Motor neuron (in vitro differentiated cells): ENCODE measurements at regions of chr12 and their contacts with region 1.

Region 1: DNA sequence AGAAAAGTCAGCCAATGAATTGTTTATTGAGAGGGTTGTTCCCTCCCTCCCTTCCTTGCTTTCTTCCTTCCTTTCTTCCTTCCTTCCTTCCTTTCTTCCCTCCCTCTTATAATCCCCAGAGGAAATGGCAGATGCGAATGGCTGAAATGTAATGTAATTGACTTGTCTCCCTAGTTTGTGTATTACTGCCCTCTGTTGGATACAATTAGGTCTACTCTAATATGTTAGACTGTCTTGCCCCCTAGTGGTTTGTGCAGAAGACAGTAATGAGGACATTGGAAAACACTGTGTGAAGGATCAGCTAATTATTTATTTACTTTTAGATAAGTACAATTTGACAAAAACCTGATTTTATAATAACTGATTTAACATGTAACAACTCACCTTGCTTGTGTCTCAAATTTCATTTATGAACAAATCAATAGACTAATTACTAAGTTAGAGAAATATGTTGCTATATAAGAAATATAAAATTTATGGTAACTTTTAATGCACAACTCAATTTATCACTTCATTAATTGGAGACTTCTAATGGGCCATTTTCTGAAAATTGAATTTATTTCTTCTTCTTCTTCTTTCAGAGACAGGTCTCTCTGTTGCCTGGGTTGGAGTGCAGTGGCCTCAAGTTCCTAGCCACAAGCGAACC is 229.8 kb upstream of the LRIG3 start:
- ATAC-seq: peak; percentile 55 to 97 (median 88)
- H3K4me3 ChIP-seq: no peak overlapping the region
- H3K27ac ChIP-seq: no peak overlapping the region
- H3K4me1 ChIP-seq: no peaks in the 10 kb centered on the region

Region 2: GRCh38 chr12:59067083-59067482 is 83.0 kb before region 1 on chr12:
- in situ Hi-C with region 1: no loop called
- ATAC-seq: peak; percentile 25 to 93 (median 81)
- H3K4me3 ChIP-seq: no peak overlapping the region
- H3K27ac ChIP-seq: no peak overlapping the region
- H3K4me1 ChIP-seq: peaks cover 10 to 14% of the 10 kb centered on the region in 2 donors

Region 3: DNA sequence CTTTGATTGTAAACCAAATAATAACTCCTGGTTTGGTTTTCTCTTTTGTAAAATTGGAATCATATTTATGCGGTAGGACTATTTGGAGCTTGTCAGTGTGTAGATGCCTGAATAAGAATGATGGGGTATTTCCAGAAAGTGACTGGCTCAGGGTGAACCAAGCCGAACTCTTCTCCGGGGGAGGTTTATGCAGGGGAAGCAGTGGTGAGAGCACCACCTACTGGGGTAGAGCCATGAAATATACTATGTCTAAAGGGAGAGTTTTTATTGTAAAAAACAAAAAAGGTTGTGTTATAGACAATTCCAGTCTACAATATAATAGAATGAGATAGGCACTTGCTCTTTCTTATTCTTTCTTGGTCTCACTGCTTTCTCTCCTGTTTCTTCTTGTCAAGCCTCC is 222.8 kb after region 1 on chr12:
- in situ Hi-C with region 1: loop called in 1 of 9 experiments (anchors 25 kb)
- ATAC-seq: peak in 3 of 8 experiments; percentile 87 to 99 (median 98)
- H3K4me3 ChIP-seq: no peak overlapping the region
- H3K27ac ChIP-seq: no peak overlapping the region
- H3K4me1 ChIP-seq: no peaks in the 10 kb centered on the region